ENCODE measurements at regions of chr18 and their contacts with region 1.

Region 1: DNA sequence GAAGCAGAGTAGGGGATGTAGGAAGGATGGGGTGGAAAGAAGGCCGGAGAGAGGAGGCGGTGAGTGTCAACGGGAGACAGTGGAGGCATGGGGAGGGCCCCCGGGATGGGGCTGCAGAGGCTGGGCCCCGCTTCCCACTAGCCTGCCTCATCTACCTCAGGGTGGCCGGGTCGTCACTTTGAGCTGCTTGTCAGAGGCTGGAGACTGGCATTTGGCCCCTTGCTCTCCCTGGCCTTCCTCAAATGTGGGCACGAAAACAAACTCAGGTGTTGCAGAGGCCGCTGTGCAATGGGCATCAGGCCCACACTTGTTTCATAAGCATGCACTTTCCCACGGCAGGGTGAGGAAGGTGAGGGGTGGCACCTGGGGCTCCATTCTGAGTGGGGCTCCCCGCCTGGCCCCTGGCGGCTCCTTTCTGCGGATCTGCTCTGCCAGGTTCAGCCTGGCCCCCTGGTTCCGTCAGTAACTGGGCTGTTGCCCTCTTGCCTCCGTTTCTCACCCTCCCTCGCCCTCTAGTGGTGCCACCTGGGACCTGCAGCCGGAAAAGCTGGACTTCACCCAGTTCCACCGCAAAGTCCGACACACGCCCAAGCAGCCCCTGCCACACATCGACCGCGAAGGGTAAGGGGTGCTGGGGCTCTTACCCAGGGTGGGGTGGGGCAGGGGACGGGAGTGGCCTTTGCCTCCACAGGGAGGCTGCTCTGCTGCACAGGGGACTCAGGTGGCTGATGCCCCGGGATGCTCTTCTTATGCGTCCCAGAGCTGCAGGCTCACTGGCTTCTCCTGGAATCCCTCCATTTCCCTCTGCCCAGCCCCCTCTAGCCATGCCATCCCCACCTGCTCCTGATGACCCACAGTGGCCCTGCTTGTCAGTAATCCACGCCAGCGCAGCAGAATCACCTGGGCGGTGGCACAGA is 125.4 kb downstream of the CTIF start:
- DNase-seq: peak; percentile 81
- ATAC-seq: peak; percentile 77

Region 2: GRCh38 chr18:48475635-48476549 is 188.3 kb before region 1 on chr18:
- intact Hi-C with region 1: loop called (anchors 2 kb)
- DNase-seq: no peak
- ATAC-seq: peak; percentile 95

Region 3: DNA sequence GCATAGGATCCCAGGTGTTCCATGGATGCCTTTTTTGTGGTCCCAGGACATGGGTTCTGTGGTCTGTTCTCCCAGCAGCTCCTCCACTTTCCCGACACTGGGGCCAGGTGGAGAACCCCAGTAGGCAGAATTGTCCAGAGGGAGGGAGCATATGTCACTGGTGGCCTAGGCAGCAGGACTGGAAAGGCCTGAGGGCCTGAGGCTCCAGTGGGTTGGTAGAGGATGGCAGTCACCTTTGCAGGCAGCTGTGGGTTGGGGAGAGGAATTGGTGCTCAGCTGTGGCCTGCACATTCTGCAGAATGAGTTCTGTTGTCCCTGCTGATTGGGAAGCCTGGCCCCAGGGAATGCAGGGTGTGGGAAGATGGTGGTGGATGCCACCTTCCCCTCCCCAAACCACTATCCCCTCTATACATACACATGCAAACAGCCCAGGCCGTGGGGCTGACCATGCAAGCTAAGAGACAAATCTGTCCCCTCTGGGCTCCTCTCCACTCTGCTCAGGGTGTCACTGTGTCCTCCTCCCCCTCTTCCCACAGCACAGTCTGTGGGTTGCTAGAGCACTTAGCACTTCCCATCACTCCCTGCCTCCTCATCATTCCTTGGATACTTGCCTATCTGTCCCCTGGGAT is 114.0 kb before region 1 on chr18:
- intact Hi-C with region 1: loop called (anchors 10 kb)
- DNase-seq: no peak
- ATAC-seq: no peak

Region 4: DNA sequence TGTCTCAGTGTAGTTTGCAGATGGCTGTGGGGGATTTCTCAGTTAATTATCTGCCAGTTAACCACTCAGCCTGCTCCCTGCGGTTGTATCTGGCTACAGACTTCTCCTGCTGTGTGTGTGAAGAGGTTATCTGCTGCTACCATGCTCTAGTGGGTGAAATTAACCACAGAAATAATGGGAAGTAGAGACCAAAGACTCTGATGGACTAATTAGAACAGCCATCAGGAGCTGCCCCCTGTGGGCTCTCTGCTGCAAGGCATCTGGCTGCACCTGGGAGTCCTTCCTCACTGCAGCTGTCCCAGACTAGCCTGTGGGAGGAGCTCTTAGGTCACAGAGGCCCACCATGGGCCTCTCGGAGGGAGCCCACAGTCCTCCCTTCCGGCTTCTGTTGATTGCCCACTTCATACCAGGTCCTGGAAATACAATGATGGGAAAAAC is 58.8 kb before region 1 on chr18:
- intact Hi-C with region 1: no loop called
- DNase-seq: peak; percentile 8
- ATAC-seq: no peak

Region 5: DNA sequence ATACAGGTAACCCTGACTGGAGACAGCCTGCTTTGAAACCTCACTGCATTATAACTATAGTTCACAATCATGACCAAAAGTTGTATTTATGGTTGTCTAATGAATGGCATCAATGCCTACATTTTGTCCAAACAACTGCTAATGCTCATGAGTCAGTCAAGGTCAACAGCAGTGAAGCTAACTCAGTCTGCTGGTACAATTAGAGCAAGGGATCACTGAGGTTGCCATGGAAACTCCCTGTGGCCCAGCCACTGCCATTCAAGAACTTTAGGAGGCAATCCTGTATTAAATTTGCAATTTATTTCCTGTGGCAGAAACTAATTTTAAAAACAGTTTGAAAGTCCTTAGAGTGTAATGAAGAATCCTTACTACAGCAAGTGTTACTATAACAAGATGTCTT is 471.7 kb after region 1 on chr18:
- intact Hi-C with region 1: no loop called
- DNase-seq: no peak
- ATAC-seq: no peak